ENCODE measurements at regions of chrX and their contacts with region 1.

Region 1: GRCh38 chrX:136162831-136163570 is 15.7 kb downstream of the FHL1 start:
- DNase-seq: peak; percentile 59
- H3K4me3 ChIP-seq: no peak overlapping the region
- H3K27ac ChIP-seq: no peak overlapping the region
- H3K4me1 ChIP-seq: no peaks in the 10 kb centered on the region
- H3K27me3 ChIP-seq: no peaks in the 10 kb centered on the region
- CTCF ChIP-seq: peak; percentile 61 to 71
- POLR2A ChIP-seq: no peak

Region 2: GRCh38 chrX:136034668-136035067 is 128.3 kb before region 1 on chrX:
- CTCF ChIA-PET with region 1: interaction called, 269 read pairs
- POLR2A ChIA-PET with region 1: no interaction called
- dilution Hi-C with region 1: no loop called
- intact Hi-C with region 1: no loop called
- DNase-seq: no peak
- H3K4me3 ChIP-seq: no peak overlapping the region
- H3K27ac ChIP-seq: no peak overlapping the region
- H3K4me1 ChIP-seq: peaks cover 17% of the 10 kb centered on the region
- H3K27me3 ChIP-seq: no peaks in the 10 kb centered on the region
- CTCF ChIP-seq: no peak
- POLR2A ChIP-seq: no peak

Region 3: DNA sequence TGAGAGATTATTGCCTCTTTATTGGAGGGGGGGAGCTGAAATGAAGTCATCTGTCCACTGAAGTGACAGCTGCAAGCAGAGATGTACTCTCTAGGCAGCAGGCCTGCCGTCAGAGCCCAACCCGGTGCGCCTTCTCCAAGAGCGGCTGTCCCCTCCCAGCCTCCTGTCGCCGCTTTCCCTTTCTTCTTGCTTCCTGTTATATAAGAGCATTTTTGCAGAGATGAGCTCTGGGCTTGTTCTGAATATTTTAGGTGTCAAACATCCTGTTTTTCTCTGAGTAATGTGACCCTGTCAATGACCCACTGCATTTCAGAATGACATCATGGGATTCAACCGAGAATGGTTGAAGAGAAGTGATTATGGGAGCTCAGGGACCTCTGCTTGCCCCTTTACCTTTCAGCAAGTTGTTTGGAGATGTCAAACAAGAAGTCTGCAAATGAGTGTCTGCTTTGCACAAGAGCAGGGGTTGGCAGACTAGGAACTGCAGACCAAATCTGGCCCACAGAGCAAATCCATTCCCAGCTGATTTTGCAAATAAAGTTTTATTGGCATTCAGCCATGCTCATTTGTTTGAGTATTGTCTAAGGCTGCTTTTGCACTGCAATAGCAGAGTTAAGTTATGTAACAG is 97.8 kb before region 1 on chrX:
- CTCF ChIA-PET with region 1: interaction called, 14 read pairs
- POLR2A ChIA-PET with region 1: no interaction called
- dilution Hi-C with region 1: no loop called
- intact Hi-C with region 1: no loop called
- DNase-seq: peak; percentile 84
- H3K4me3 ChIP-seq: no peak overlapping the region
- H3K27ac ChIP-seq: peak overlapping the region; percentile 36
- H3K4me1 ChIP-seq: peaks cover 17% of the 10 kb centered on the region
- H3K27me3 ChIP-seq: peaks cover 0 to 2% of the 10 kb centered on the region in 2 experiments
- CTCF ChIP-seq: no peak
- POLR2A ChIP-seq: no peak

Region 4: DNA sequence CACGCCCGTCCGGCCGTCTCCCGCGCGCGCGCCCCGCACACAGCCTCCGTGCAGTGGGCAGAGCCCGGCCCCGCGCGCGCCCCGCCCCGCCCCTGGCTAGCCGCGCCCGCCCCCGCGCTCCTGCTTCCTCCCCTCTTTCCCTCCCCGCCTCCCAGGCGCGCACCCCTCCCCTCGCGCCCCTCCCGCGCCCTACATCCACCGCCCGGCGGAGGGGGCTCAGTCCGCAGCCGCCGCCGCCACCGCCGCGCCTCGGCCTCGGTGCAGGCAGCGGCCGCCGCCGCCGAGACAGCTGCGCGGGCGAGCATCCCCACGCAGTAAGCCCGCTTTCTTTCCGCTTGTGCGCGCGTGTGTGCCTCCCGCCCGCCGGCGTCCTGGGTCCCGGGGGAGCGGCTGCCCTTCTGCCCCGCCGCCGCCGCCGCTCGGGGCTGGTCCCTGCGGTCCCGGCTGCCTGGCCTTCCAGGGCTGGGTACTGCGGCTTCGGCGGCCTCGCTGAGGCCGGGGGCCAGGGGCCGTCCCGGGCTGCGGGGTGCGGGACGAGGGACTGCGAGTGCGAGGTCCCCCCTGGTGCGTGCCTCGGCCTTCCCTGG is 15.6 kb before region 1 on chrX and contains the start of gene FHL1:
- CTCF ChIA-PET with region 1: interaction called, 9 read pairs
- POLR2A ChIA-PET with region 1: no interaction called
- dilution Hi-C with region 1: no loop called
- intact Hi-C with region 1: loop called (anchors 2 kb)
- DNase-seq: peak; percentile 32
- H3K4me3 ChIP-seq: peak within 1 kb of the TSS; percentile 56 to 62 (median 61)
- H3K27ac ChIP-seq: no peak within 1 kb of the TSS
- H3K4me1 ChIP-seq: peaks cover 2% of the 10 kb centered on the region
- H3K27me3 ChIP-seq: peaks cover 0 to 2% of the 10 kb centered on the region in 2 experiments
- CTCF ChIP-seq: no peak
- POLR2A ChIP-seq: no peak
- total RNA-seq, gene FHL1: 59.4 and 73.2 TPM in 2 replicates

Region 5: GRCh38 chrX:136209016-136209738 is 46.2 kb after region 1 on chrX:
- CTCF ChIA-PET with region 1: interaction called, 98 read pairs
- POLR2A ChIA-PET with region 1: no interaction called
- dilution Hi-C with region 1: no loop called
- intact Hi-C with region 1: no loop called
- DNase-seq: peak; percentile 55
- H3K4me3 ChIP-seq: no peak overlapping the region
- H3K27ac ChIP-seq: no peak overlapping the region
- H3K4me1 ChIP-seq: peaks cover 6% of the 10 kb centered on the region
- H3K27me3 ChIP-seq: no peaks in the 10 kb centered on the region
- CTCF ChIP-seq: peak; percentile 36 to 62
- POLR2A ChIP-seq: no peak

Region 6: DNA sequence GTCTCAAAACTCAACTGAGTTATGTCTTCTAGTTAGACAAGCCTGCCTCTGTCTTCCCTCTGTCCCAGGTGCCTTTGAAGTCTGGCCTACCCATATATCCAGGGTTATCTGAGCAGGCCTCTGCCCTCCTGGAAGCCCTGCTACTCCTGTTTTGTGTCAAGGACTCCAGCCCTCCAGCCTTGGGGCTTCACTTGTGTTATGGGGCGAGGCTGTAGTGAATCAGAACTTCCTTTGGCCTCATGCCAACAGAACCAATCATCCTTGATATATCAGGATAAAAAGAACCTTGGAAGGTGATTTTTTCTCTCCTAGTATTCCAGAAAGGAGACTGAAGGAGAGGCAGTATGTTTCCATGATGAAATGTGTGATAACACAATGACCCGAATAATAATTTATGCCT is 128.8 kb after region 1 on chrX:
- CTCF ChIA-PET with region 1: no interaction called
- POLR2A ChIA-PET with region 1: no interaction called
- dilution Hi-C with region 1: no loop called
- intact Hi-C with region 1: no loop called
- DNase-seq: no peak
- H3K4me3 ChIP-seq: no peak overlapping the region
- H3K27ac ChIP-seq: no peak overlapping the region
- H3K4me1 ChIP-seq: no peaks in the 10 kb centered on the region
- H3K27me3 ChIP-seq: no peaks in the 10 kb centered on the region
- CTCF ChIP-seq: no peak
- POLR2A ChIP-seq: no peak

Measured in endothelial cell of umbilical vein (primary cell).